ENCODE measurements at regions of chr7 and their contacts with region 1.

Region 1: DNA sequence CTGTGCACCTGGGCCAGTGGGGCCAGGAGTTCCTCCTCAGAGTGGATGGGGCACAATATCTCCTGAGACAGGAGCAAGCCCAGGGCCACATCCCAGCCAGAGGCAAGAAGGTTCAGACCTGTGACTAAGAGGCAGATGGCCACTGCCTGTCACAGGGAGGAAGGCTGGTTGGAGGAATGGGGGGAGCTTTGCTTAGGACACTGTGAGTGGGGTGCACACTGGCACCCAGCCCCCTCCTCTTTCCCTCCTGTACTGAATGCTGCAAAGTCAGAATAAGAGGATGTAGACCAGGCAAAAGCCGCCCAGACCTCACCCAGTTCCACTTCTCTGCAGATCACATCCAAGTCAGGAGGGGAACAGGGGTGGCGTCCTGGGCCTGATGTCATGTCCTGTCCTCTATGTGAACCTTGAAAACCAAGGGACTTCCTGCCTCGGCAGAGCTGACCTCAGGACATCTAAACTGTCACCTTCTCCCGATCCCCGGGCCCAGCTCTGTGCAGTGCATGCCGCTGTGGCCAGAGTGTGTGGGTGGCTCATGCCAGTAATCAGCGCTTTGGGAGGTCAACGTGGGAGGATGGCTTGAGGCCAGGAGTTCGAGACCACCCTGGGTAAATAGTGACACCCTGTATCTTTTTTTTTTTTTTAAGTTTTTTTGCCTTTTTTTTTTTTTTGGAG is 1.3 kb downstream of the GUSB start:
- H3K4me3 ChIP-seq: peak overlapping the region; percentile 76
- H3K27ac ChIP-seq: no peak overlapping the region
- H3K4me1 ChIP-seq: no peaks in the 10 kb centered on the region
- CTCF ChIP-seq: no peak

Region 2: DNA sequence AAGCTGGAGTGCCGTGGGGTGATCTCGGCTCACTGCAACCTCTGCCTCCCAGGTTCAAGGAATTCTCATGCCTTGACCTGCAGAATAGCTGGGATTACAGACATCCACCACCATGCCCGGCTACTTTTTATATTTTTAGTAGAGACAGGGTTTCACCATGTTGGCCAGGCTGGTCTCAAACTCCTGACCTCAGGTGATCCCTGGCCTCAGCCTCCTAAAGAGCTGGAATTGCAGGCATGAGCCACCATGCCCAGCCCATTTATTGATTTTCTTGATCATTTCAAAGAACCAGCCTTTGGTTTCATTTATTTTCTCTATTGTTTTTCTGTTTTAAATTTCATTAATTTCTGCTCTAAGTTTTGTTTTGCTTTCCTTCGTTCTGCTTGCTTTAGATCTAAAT is 49.0 kb before region 1 on chr7:
- CTCF ChIA-PET with region 1: interaction called, 10 read pairs
- POLR2A ChIA-PET with region 1: interaction called, 3 read pairs
- H3K4me3 ChIP-seq: no peak overlapping the region
- H3K27ac ChIP-seq: no peak overlapping the region
- H3K4me1 ChIP-seq: 0 out of 2 replicates have a peak, but pooled peaks cover 3% of the 10 kb centered on the region
- CTCF ChIP-seq: no peak

Measured in HEK293 (cell line).